Caco-2 (cell line): ENCODE measurements at regions of chr11 and their contacts with region 1.

Region 1: GRCh38 chr11:77729063-77729462 is 91.5 kb downstream of the RSF1 start:
- DNase-seq: peak in 1 of 2 experiments; percentile 65
- H3K4me3 ChIP-seq: no peak overlapping the region
- H3K4me3 Mint-ChIP-seq: peak overlapping the region; percentile 22
- H3K27ac Mint-ChIP-seq: peak overlapping the region; percentile 39
- H3K4me1 ChIP-seq: peaks cover 27% of the 10 kb centered on the region
- H3K4me1 Mint-ChIP-seq: peaks cover 21% of the 10 kb centered on the region
- H3K27me3 ChIP-seq: no peaks in the 10 kb centered on the region
- H3K27me3 Mint-ChIP-seq: no peaks in the 10 kb centered on the region
- CTCF ChIP-seq: no peak

Region 2: DNA sequence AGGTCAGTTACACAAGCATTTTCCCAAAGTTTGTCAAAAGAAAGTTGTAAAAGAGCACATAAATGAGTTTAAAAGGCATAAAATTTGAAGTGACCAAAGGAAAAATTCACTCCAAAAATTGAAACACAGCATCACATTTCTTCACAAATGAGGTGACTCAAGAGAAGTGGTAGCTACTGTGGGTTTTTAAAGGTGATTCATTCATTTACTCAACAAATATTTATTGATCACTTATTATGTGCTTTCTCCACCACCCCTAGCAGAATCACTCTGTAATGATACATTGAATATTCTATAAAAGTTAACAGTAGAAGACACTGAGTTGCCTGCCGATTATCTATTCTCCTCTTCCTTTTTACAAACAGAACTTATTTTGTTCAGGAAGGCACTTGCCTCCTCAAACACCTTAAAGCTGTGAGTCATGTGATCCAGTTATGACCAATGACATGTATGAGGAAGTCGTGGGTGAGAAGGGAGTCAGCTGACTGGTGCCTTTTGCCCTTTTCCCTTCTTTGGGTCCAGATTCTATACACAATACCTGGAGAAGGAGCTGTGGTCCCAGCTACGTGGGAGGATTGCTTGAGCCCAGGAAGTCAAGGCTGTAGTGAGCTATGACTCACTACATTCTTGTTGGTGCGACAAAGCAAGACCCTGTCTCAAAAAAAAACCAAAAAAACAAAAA is 23.7 kb before region 1 on chr11:
- CTCF ChIA-PET with region 1: interaction called, 5 read pairs
- POLR2A ChIA-PET with region 1: interaction called, 4 read pairs
- intact Hi-C with region 1: loop called (anchors 2 kb)
- DNase-seq: peak; percentile 79 to 89
- H3K4me3 ChIP-seq: no peak overlapping the region
- H3K4me3 Mint-ChIP-seq: peak overlapping the region; percentile 52
- H3K27ac Mint-ChIP-seq: peak overlapping the region; percentile 33
- H3K4me1 ChIP-seq: peaks cover 19% of the 10 kb centered on the region
- H3K4me1 Mint-ChIP-seq: peaks cover 10% of the 10 kb centered on the region
- H3K27me3 ChIP-seq: no peaks in the 10 kb centered on the region
- H3K27me3 Mint-ChIP-seq: no peaks in the 10 kb centered on the region
- CTCF ChIP-seq: no peak

Region 3: DNA sequence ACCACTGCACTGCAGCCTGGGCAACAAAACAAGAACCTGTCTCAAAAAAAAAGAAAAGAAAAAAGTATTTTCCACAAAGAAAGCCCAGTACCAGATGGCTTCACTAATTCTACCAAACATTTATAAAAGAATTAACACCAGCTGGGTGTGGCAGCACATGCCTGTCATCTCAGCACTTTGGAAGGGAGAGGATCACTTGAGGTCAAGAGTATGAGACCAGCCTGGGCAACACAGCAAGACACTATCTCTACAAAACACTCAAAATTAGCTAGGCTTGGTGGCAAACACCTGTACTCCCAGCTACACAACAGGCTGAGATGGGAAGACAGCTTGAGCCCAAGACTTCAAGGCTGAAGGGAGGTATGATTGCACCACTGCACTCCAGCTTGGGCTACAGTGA is 71.4 kb after region 1 on chr11:
- CTCF ChIA-PET with region 1: no interaction called
- POLR2A ChIA-PET with region 1: interaction called, 3 read pairs
- intact Hi-C with region 1: loop called (anchors 1 kb)
- DNase-seq: no peak
- H3K4me3 ChIP-seq: no peak overlapping the region
- H3K4me3 Mint-ChIP-seq: peak overlapping the region; percentile 64
- H3K27ac Mint-ChIP-seq: peak overlapping the region; percentile 94
- H3K4me1 ChIP-seq: peaks cover 39% of the 10 kb centered on the region
- H3K4me1 Mint-ChIP-seq: peaks cover 34% of the 10 kb centered on the region
- H3K27me3 ChIP-seq: no peaks in the 10 kb centered on the region
- H3K27me3 Mint-ChIP-seq: no peaks in the 10 kb centered on the region
- CTCF ChIP-seq: no peak